ENCODE measurements at regions of chr7 and their contacts with region 1.

Region 1: DNA sequence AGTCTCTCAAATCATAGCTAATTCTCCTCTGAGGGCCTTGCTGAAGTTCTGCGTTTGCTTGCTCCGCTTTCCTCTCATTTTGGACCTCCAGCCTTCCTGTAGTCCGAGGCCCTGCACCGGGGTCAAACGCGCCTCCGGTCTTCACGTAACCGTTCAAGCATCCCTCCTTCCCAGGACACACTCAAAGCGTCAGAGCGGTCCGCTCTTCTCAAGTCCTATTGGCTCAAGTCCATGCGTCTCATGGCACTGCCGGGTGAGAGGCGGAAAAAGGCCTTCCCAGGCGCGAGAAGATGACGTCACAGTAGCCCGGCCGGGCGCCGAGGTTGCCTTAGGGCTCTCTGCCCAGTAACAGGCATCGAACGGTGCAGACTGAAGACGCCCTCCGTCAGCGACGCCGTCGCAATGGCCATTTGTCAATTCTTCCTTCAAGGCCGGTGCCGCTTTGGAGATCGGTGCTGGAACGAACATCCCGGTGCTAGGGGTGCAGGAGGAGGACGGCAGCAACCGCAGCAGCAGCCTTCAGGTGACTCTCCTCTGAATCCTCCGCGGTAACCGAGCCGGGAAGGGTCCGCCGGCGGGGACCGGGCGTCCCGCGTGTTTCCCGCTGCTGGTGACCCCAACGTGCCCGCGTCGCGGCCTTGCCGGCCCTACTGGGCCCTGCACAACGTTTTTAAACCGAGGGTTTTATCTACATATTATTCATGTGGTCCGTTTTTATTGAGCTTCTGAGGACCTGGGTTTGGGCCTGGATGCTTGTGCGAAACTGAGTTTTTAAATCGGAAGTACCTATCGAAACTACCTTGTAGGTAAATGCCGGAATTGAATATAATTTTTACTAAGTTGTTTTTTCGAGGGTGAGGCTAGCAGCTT is at the start of gene NUP42:
- DNase-seq: peak; percentile 87 to 95 (median 93)
- ATAC-seq: peak; percentile 97
- H3K4me3 ChIP-seq: peak within 1 kb of the TSS; percentile 86
- H3K4me3 Mint-ChIP-seq: peak within 1 kb of the TSS; percentile 95 to 100 (median 98)
- H3K27ac ChIP-seq: peak within 1 kb of the TSS; percentile 85
- H3K27ac Mint-ChIP-seq: peak within 1 kb of the TSS; percentile 97 to 99 (median 98)
- H3K4me1 ChIP-seq: peaks cover 16 to 17% of the 10 kb centered on the region in 2 donors
- H3K4me1 Mint-ChIP-seq: peaks cover 20 to 50% (median 43%) of the 10 kb centered on the region in 7 donors
- H3K27me3 ChIP-seq: no peaks in the 10 kb centered on the region
- H3K27me3 Mint-ChIP-seq: peaks cover 0 to 16% (median 0%) of the 10 kb centered on the region in 5 donors
- total RNA-seq, gene NUP42: 19.8 to 37.7 (median 27.5) TPM

Region 2: DNA sequence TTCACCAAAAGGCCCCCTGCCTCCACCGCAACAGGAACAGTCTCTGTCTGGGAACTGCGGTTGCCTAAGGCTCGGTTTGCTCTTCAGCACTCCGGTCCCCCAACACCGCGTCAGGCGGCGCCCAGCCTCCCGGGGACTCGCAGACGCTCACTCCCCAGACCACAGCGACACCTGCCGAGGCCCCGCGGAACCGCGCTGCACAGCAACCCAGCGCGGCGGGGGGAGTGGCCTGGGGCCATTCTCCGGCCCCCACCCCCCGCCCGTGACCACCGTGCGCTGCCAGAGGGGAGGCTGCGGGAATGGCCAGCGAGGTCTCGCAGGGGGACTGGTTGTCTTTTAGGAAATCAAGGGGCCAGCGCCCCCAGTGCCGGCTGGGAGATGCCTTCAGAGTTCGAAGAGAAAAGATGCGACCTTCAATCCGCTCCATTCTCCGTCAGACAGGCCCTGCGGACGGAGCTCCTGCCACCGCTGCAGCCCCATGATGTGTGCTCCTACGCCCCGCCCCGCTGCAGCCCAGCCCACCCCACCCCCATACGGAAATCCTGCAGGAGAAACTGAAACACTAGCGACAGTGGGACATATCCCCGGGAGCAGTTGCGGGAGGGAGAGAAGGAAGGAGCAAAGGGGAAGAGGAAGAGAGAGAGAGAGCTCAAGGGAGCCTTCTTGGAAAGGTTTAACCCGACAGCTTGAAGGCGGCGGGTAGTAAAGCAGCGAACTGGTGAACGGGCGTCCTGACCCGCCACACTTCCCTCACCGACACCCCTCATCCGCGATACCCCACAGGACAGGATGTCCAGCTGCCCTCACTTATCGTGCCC is 1098.8 kb before region 1 on chr7:
- CTCF ChIA-PET with region 1: no interaction called
- POLR2A ChIA-PET with region 1: no interaction called
- intact Hi-C with region 1: loop called in 1 of 2 experiments (anchors 1 kb)
- DNase-seq: peak; percentile 59 to 86 (median 73)
- ATAC-seq: peak; percentile 99
- H3K4me3 ChIP-seq: peak overlapping the region; percentile 54
- H3K4me3 Mint-ChIP-seq: peak overlapping the region; percentile 79 to 90 (median 86)
- H3K27ac ChIP-seq: peak overlapping the region; percentile 57
- H3K27ac Mint-ChIP-seq: peak overlapping the region in 7 of 9 donors; percentile 28 to 80 (median 62)
- H3K4me1 ChIP-seq: peaks cover 5 to 7% of the 10 kb centered on the region in 2 donors
- H3K4me1 Mint-ChIP-seq: peaks cover 6 to 18% (median 13%) of the 10 kb centered on the region in 7 donors
- H3K27me3 ChIP-seq: no peaks in the 10 kb centered on the region
- H3K27me3 Mint-ChIP-seq: peaks cover 17 to 50% (median 21%) of the 10 kb centered on the region in 5 donors

Region 3: DNA sequence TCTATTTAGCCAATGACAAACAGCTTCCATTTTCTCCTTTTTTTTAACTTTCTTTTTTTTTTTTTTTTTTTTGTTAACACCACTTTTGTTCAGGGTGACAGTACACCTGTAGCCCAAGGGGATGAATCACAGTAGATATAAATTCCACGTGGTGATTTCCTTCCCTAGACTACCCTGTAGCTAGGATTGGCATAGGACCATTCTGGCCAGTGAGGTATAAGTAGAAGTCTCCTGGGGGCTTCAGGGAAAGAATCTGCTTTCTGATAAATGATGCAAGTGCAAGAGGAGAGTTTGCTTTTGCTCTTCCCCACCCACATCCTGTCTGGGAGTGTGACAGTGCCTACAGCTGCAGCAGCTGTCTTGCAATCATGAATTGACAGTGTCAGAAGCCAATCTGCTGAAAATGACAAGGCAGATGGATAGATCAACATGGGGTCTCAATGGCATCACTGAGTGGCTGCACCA is 296.1 kb before region 1 on chr7:
- CTCF ChIA-PET with region 1: no interaction called
- POLR2A ChIA-PET with region 1: no interaction called
- intact Hi-C with region 1: loop called in 1 of 2 experiments (anchors 10 kb)
- DNase-seq: peak in 7 of 9 donors; percentile 5 to 58 (median 47)
- ATAC-seq: peak; percentile 69
- H3K4me3 ChIP-seq: no peak overlapping the region
- H3K4me3 Mint-ChIP-seq: peak overlapping the region in 8 of 10 donors; percentile 19 to 84 (median 36)
- H3K27ac ChIP-seq: peak overlapping the region; percentile 8
- H3K27ac Mint-ChIP-seq: peak overlapping the region in 7 of 9 donors; percentile 19 to 95 (median 67)
- H3K4me1 ChIP-seq: peaks cover 8 to 9% of the 10 kb centered on the region in 2 donors
- H3K4me1 Mint-ChIP-seq: peaks cover 5 to 39% (median 14%) of the 10 kb centered on the region in 7 donors
- H3K27me3 ChIP-seq: no peaks in the 10 kb centered on the region
- H3K27me3 Mint-ChIP-seq: no peaks in the 10 kb centered on the region

Region 4: DNA sequence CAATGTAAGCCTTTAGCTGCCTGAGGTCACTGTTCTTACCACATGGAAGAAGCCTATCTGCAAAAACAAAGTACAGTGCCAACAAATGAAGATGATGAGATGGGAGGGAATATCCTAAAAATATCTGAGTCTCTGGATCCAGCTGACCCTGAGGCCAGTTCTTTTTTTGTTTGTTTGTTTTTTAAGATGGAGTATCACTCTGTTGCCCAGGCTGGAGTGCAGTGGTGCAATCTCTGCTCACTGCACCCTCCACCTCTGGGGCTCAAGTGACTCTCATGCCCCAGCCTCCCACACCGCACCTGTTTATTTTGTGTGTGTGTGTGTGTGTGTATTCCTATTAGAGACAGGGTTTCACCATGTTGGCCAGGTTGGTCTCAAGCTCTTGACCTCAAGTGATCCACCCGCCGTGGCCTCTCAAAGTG is 212.9 kb before region 1 on chr7:
- CTCF ChIA-PET with region 1: no interaction called
- POLR2A ChIA-PET with region 1: no interaction called
- intact Hi-C with region 1: no loop called
- DNase-seq: no peak
- ATAC-seq: no peak
- H3K4me3 ChIP-seq: no peak overlapping the region
- H3K4me3 Mint-ChIP-seq: no peak overlapping the region
- H3K27ac ChIP-seq: no peak overlapping the region
- H3K27ac Mint-ChIP-seq: no peak overlapping the region
- H3K4me1 ChIP-seq: no peaks in the 10 kb centered on the region
- H3K4me1 Mint-ChIP-seq: no peaks in the 10 kb centered on the region
- H3K27me3 ChIP-seq: no peaks in the 10 kb centered on the region
- H3K27me3 Mint-ChIP-seq: no peaks in the 10 kb centered on the region

Region 5: GRCh38 chr7:23261843-23262452 is 80.0 kb after region 1 on chr7:
- CTCF ChIA-PET with region 1: no interaction called
- POLR2A ChIA-PET with region 1: no interaction called
- intact Hi-C with region 1: loop called in 1 of 2 experiments (anchors 1 kb)
- DNase-seq: peak; percentile 18 to 54 (median 43)
- ATAC-seq: peak; percentile 92
- H3K4me3 ChIP-seq: no peak overlapping the region
- H3K4me3 Mint-ChIP-seq: no peak overlapping the region
- H3K27ac ChIP-seq: no peak overlapping the region
- H3K27ac Mint-ChIP-seq: no peak overlapping the region
- H3K4me1 ChIP-seq: peaks cover 0 to 3% of the 10 kb centered on the region in 2 donors
- H3K4me1 Mint-ChIP-seq: no peaks in the 10 kb centered on the region
- H3K27me3 ChIP-seq: no peaks in the 10 kb centered on the region
- H3K27me3 Mint-ChIP-seq: peaks cover 0 to 20% (median 0%) of the 10 kb centered on the region in 5 donors

Region 6: GRCh38 chr7:23474094-23474828 is 292.3 kb after region 1 on chr7:
- CTCF ChIA-PET with region 1: no interaction called
- POLR2A ChIA-PET with region 1: no interaction called
- intact Hi-C with region 1: loop called in 1 of 2 experiments (anchors 2 kb)
- DNase-seq: peak in 6 of 9 donors; percentile 13 to 90 (median 26)
- ATAC-seq: peak; percentile 80
- H3K4me3 ChIP-seq: no peak overlapping the region
- H3K4me3 Mint-ChIP-seq: peak overlapping the region; percentile 13 to 85 (median 54)
- H3K27ac ChIP-seq: no peak overlapping the region
- H3K27ac Mint-ChIP-seq: peak overlapping the region in 5 of 9 donors; percentile 21 to 70 (median 69)
- H3K4me1 ChIP-seq: peaks cover 12 to 22% of the 10 kb centered on the region in 2 donors
- H3K4me1 Mint-ChIP-seq: peaks cover 17 to 35% (median 29%) of the 10 kb centered on the region in 7 donors
- H3K27me3 ChIP-seq: peaks cover 78 to 85% of the 10 kb centered on the region in 2 donors
- H3K27me3 Mint-ChIP-seq: peaks cover 67 to 75% (median 70%) of the 10 kb centered on the region in 5 donors